CD4-positive, alpha-beta T cell (primary cell): ENCODE measurements at regions of chr15 and their contacts with region 1.

Region 1: GRCh38 chr15:100341662-100342560 is at the start of gene ADAMTS17:
- DNase-seq: peak; percentile 89 to 98 (median 94)
- ATAC-seq: peak; percentile 96
- H3K4me3 ChIP-seq: peak within 1 kb of the TSS; percentile 58
- H3K4me3 Mint-ChIP-seq: peak within 1 kb of the TSS; percentile 88
- H3K27ac ChIP-seq: no peak within 1 kb of the TSS
- H3K27ac Mint-ChIP-seq: no peak within 1 kb of the TSS
- H3K4me1 ChIP-seq: peaks cover 27% of the 10 kb centered on the region
- H3K4me1 Mint-ChIP-seq: peaks cover 14% of the 10 kb centered on the region
- H3K27me3 ChIP-seq: no peaks in the 10 kb centered on the region
- H3K27me3 Mint-ChIP-seq: no peaks in the 10 kb centered on the region
- CTCF ChIP-seq: peak; percentile 92
- total RNA-seq, gene ADAMTS17: 9.9 to 13.2 TPM

Region 2: GRCh38 chr15:99565299-99566156 is 776.4 kb before region 1 on chr15 and contains the start of gene MEF2A:
- CTCF ChIA-PET with region 1: no interaction called
- POLR2A ChIA-PET with region 1: no interaction called
- intact Hi-C with region 1: loop called in 1 of 2 experiments (anchors 5 kb)
- DNase-seq: peak; percentile 84 to 96 (median 88)
- ATAC-seq: peak; percentile 69
- H3K4me3 ChIP-seq: peak within 1 kb of the TSS; percentile 97
- H3K4me3 Mint-ChIP-seq: peak within 1 kb of the TSS; percentile 97
- H3K27ac ChIP-seq: peak within 1 kb of the TSS; percentile 86 to 94
- H3K27ac Mint-ChIP-seq: peak within 1 kb of the TSS; percentile 96
- H3K4me1 ChIP-seq: peaks cover 22% of the 10 kb centered on the region
- H3K4me1 Mint-ChIP-seq: peaks cover 57% of the 10 kb centered on the region
- H3K27me3 ChIP-seq: no peaks in the 10 kb centered on the region
- H3K27me3 Mint-ChIP-seq: no peaks in the 10 kb centered on the region
- CTCF ChIP-seq: no peak
- total RNA-seq, gene MEF2A: 23.2 to 24.9 TPM

Region 3: GRCh38 chr15:99818872-99819271 is 523.0 kb before region 1 on chr15:
- CTCF ChIA-PET with region 1: no interaction called
- POLR2A ChIA-PET with region 1: no interaction called
- intact Hi-C with region 1: loop called in 1 of 2 experiments (anchors 10 kb)
- DNase-seq: no peak
- ATAC-seq: no peak
- H3K4me3 ChIP-seq: no peak overlapping the region
- H3K4me3 Mint-ChIP-seq: no peak overlapping the region
- H3K27ac ChIP-seq: no peak overlapping the region
- H3K27ac Mint-ChIP-seq: no peak overlapping the region
- H3K4me1 ChIP-seq: no peaks in the 10 kb centered on the region
- H3K4me1 Mint-ChIP-seq: no peaks in the 10 kb centered on the region
- H3K27me3 ChIP-seq: no peaks in the 10 kb centered on the region
- H3K27me3 Mint-ChIP-seq: no peaks in the 10 kb centered on the region
- CTCF ChIP-seq: no peak

Region 4: GRCh38 chr15:100131321-100132224 is 210.3 kb before region 1 on chr15:
- CTCF ChIA-PET with region 1: no interaction called
- POLR2A ChIA-PET with region 1: interaction called, 3 read pairs
- intact Hi-C with region 1: loop called in 1 of 2 experiments (anchors 10 kb)
- DNase-seq: peak in 7 of 14 experiments; percentile 3 to 43 (median 9)
- ATAC-seq: no peak
- H3K4me3 ChIP-seq: peak overlapping the region; percentile 19
- H3K4me3 Mint-ChIP-seq: peak overlapping the region; percentile 51
- H3K27ac ChIP-seq: no peak overlapping the region
- H3K27ac Mint-ChIP-seq: no peak overlapping the region
- H3K4me1 ChIP-seq: no peaks in the 10 kb centered on the region
- H3K4me1 Mint-ChIP-seq: no peaks in the 10 kb centered on the region
- H3K27me3 ChIP-seq: no peaks in the 10 kb centered on the region
- H3K27me3 Mint-ChIP-seq: no peaks in the 10 kb centered on the region
- CTCF ChIP-seq: peak; percentile 27

Region 5: GRCh38 chr15:100276506-100276905 is 65.4 kb before region 1 on chr15:
- CTCF ChIA-PET with region 1: no interaction called
- POLR2A ChIA-PET with region 1: no interaction called
- intact Hi-C with region 1: no loop called
- DNase-seq: no peak
- ATAC-seq: no peak
- H3K4me3 ChIP-seq: no peak overlapping the region
- H3K4me3 Mint-ChIP-seq: no peak overlapping the region
- H3K27ac ChIP-seq: no peak overlapping the region
- H3K27ac Mint-ChIP-seq: no peak overlapping the region
- H3K4me1 ChIP-seq: no peaks in the 10 kb centered on the region
- H3K4me1 Mint-ChIP-seq: no peaks in the 10 kb centered on the region
- H3K27me3 ChIP-seq: no peaks in the 10 kb centered on the region
- H3K27me3 Mint-ChIP-seq: no peaks in the 10 kb centered on the region
- CTCF ChIP-seq: no peak

Region 6: DNA sequence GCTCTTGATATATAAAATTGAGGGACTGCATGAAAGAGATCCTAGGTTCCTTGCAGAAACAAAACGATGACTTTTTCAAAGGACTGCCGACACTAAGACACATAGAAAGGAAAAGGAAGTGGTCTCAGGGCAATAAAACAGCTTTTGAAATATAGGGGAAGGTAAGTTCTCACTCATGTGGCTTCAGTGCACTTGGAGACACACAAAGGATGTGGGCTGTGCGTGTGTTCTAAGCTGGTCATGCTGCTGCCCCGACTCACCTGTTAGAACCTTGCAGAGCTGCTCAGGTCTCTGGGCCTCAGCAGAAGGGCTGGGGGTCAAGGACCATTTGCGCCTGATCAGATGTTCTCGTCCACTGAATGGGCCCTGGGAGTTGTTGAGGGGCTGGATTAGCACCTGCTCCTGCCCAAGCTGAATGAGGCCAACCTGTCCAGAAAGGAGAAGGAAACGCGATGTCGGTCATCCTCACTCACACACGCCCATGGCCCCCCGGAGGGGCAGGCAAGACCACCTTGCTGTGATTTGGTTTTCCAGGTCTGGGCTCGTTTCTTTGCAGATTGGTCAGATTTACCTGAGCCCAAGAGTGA is 11.2 kb before region 1 on chr15:
- CTCF ChIA-PET with region 1: interaction called, 11 read pairs
- POLR2A ChIA-PET with region 1: interaction called, 24 read pairs
- intact Hi-C with region 1: no loop called
- DNase-seq: peak in 10 of 14 experiments; percentile 22 to 87 (median 46)
- ATAC-seq: peak; percentile 90
- H3K4me3 ChIP-seq: peak overlapping the region; percentile 44
- H3K4me3 Mint-ChIP-seq: peak overlapping the region; percentile 54
- H3K27ac ChIP-seq: peak overlapping the region in 1 of 2 donors; percentile 46
- H3K27ac Mint-ChIP-seq: peak overlapping the region; percentile 50
- H3K4me1 ChIP-seq: peaks cover 72% of the 10 kb centered on the region
- H3K4me1 Mint-ChIP-seq: peaks cover 87% of the 10 kb centered on the region
- H3K27me3 ChIP-seq: no peaks in the 10 kb centered on the region
- H3K27me3 Mint-ChIP-seq: no peaks in the 10 kb centered on the region
- CTCF ChIP-seq: no peak

Region 7: DNA sequence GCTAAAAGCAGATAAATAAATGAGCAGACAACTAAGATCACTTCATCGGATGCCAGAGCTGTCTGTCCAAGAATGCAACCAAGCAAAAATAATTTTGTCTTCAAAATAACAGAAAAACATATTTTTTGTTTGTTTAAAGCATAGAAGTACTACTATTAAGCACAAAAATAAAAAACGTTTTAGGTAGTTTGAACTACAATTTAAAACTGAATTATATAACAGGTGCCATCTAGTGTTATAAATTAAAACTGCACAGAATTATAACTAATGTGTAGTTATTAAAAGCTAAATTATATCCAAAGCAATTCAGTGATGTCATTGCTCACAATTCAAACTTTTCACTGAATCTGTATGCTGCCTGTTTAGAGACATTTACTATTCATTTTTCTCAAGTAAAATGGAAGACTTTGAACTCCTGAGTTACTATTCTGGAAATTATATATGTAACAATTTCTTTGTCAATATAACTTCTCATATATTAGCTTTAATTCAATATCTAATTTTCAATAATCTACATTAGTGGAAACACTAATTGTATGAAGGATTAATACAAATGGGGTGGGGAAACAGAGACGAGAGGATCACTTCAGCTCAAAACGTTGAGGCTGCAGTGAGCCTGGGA is 230.6 kb after region 1 on chr15:
- CTCF ChIA-PET with region 1: interaction called, 7 read pairs
- POLR2A ChIA-PET with region 1: interaction called, 9 read pairs
- intact Hi-C with region 1: loop called (anchors 1 to 2 kb)
- DNase-seq: peak in 3 of 14 experiments; percentile 41 to 58 (median 53)
- ATAC-seq: peak; percentile 68
- H3K4me3 ChIP-seq: peak overlapping the region; percentile 12
- H3K4me3 Mint-ChIP-seq: peak overlapping the region; percentile 22
- H3K27ac ChIP-seq: peak overlapping the region in 1 of 2 donors; percentile 18
- H3K27ac Mint-ChIP-seq: peak overlapping the region; percentile 74
- H3K4me1 ChIP-seq: peaks cover 19% of the 10 kb centered on the region
- H3K4me1 Mint-ChIP-seq: peaks cover 62% of the 10 kb centered on the region
- H3K27me3 ChIP-seq: no peaks in the 10 kb centered on the region
- H3K27me3 Mint-ChIP-seq: no peaks in the 10 kb centered on the region
- CTCF ChIP-seq: peak; percentile 77